Colonic mucosa (tissue), 4 donors: ENCODE measurements at regions of chr4 and their contacts with region 1.

Region 1: GRCh38 chr4:51895813-51896408 is 53.0 kb downstream of the DCUN1D4 start:
- DNase-seq: peak; percentile 71
- H3K4me3 ChIP-seq: no peak overlapping the region
- H3K27ac ChIP-seq: no peak overlapping the region
- H3K4me1 ChIP-seq: no peaks in the 10 kb centered on the region
- H3K27me3 ChIP-seq: no peaks in the 10 kb centered on the region
- CTCF ChIP-seq: peak; percentile 78

Region 2: GRCh38 chr4:51842554-51843308 is 53.2 kb before region 1 on chr4 and contains the start of gene DCUN1D4:
- intact Hi-C with region 1: loop called (anchors 10 kb)
- DNase-seq: peak; percentile 100
- H3K4me3 ChIP-seq: peak within 1 kb of the TSS; percentile 94
- H3K27ac ChIP-seq: peak within 1 kb of the TSS; percentile 97
- H3K4me1 ChIP-seq: no peaks in the 10 kb centered on the region
- H3K27me3 ChIP-seq: no peaks in the 10 kb centered on the region
- CTCF ChIP-seq: peak; percentile 27
- total RNA-seq, gene DCUN1D4: 30.4 to 36.0 TPM

Region 3: GRCh38 chr4:51932261-51932660 is 36.4 kb after region 1 on chr4:
- intact Hi-C with region 1: no loop called
- DNase-seq: no peak
- H3K4me3 ChIP-seq: no peak overlapping the region
- H3K27ac ChIP-seq: no peak overlapping the region
- H3K4me1 ChIP-seq: no peaks in the 10 kb centered on the region
- H3K27me3 ChIP-seq: no peaks in the 10 kb centered on the region
- CTCF ChIP-seq: no peak

Region 4: GRCh38 chr4:52028969-52029368 is 133.1 kb after region 1 on chr4:
- intact Hi-C with region 1: loop called (anchors 5 kb)
- DNase-seq: no peak
- H3K4me3 ChIP-seq: no peak overlapping the region
- H3K27ac ChIP-seq: no peak overlapping the region
- H3K4me1 ChIP-seq: no peaks in the 10 kb centered on the region
- H3K27me3 ChIP-seq: no peaks in the 10 kb centered on the region
- CTCF ChIP-seq: no peak